Mucosa of descending colon (tissue), 3 donors: ENCODE measurements at regions of chrX and their contacts with region 1.

Region 1: GRCh38 chrX:19887911-19888879 is 795 bp upstream of the SH3KBP1 start:
- DNase-seq: peak; percentile 51 to 72 (median 66)
- ATAC-seq: peak; percentile 72
- H3K4me3 ChIP-seq: no peak overlapping the region
- H3K4me1 ChIP-seq: no peaks in the 10 kb centered on the region
- CTCF ChIP-seq: no peak

Region 2: DNA sequence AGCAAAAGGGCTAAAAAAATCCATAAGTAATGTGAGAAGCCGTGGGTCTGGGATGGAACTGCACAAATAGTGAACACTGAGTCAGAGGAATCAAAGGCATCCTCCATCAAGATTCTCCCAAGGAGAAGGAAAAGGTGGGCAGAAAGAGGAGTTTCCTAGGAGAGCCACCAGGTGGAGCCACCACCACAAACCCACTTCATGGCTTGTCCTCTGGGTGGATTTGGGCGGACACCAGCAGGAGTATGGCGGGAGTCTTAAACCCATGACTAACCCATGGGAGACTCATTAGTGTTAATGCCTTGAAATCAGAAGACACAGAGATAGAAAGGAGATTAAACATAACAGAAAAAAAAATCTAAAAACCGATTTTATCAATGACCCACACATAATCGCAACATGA is 148.5 kb before region 1 on chrX:
- intact Hi-C with region 1: loop called in 1 of 2 experiments (anchors 10 kb)
- DNase-seq: peak in 2 of 3 donors; percentile 60 to 64
- ATAC-seq: peak; percentile 92
- H3K4me3 ChIP-seq: no peak overlapping the region
- H3K4me1 ChIP-seq: no peaks in the 10 kb centered on the region
- CTCF ChIP-seq: peak; percentile 16

Region 3: GRCh38 chrX:19772096-19772825 is 115.9 kb before region 1 on chrX:
- intact Hi-C with region 1: no loop called
- DNase-seq: no peak
- ATAC-seq: no peak
- H3K4me3 ChIP-seq: no peak overlapping the region
- H3K4me1 ChIP-seq: peaks cover 4% of the 10 kb centered on the region
- CTCF ChIP-seq: no peak